ENCODE measurements at regions of chr17 and their contacts with region 1.

Region 1: GRCh38 chr17:82022981-82023374 is at the start of gene LRRC45:
- DNase-seq: peak; percentile 99
- ATAC-seq: peak; percentile 94
- H3K4me3 ChIP-seq: peak within 1 kb of the TSS; percentile 62 to 88 (median 79)
- H3K4me3 Mint-ChIP-seq: peak within 1 kb of the TSS; percentile 83
- H3K27ac ChIP-seq: peak within 1 kb of the TSS in 1 of 2 donors; percentile 57
- H3K27ac Mint-ChIP-seq: peak within 1 kb of the TSS; percentile 67
- H3K4me1 ChIP-seq: peaks cover 14 to 33% of the 10 kb centered on the region in 2 donors
- H3K4me1 Mint-ChIP-seq: peaks cover 15% of the 10 kb centered on the region
- H3K27me3 ChIP-seq: peaks cover 0 to 10% (median 0%) of the 10 kb centered on the region in 4 experiments
- H3K27me3 Mint-ChIP-seq: no peaks in the 10 kb centered on the region
- CTCF ChIP-seq: no peak
- total RNA-seq, gene LRRC45: 16.3 and 19.4 TPM in 2 replicates

Region 2: DNA sequence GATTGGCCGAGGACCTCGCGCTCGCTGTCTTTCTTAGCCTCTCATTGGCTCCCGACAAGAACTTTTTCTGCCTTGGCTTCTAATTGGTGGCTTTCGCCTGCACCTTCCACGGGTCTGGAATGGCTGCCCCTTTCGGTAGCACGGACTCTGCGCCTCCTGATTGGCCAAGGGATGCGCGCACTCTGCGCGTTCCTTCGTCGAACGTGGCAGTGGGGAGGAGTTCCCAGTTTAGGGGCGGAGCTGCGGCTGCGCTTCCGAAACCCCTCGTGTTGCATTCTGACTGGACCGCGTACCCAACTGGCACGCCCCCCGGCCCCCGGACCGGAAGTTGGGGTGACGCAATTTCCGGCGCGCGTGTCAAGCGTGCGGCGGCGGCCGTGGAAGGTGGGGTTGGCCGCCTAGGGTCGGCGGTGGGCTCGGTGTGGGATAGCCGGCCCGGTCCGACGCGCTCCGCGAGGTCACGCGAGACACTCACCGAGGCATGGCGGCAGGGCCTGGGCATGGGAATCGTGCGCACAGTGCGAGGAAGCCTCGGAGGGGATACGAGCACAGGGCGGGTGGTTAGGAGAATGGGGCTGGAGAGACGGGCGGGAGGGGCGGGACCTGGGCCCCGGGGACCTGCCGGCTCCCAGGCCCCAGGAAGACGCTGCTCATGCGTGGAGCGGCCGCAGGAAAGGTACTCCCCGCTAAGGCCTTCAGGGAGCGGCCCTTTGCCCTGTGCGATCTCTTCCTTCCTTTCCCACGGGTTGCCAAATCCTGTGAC is 162.0 kb before region 1 on chr17:
- CTCF ChIA-PET with region 1: no interaction called
- POLR2A ChIA-PET with region 1: no interaction called
- intact Hi-C with region 1: loop called (anchors 1 kb)
- DNase-seq: no peak
- ATAC-seq: peak; percentile 89
- H3K4me3 ChIP-seq: peak overlapping the region; percentile 39 to 75 (median 71)
- H3K4me3 Mint-ChIP-seq: peak overlapping the region; percentile 92
- H3K27ac ChIP-seq: peak overlapping the region; percentile 94 to 98
- H3K27ac Mint-ChIP-seq: peak overlapping the region; percentile 96
- H3K4me1 ChIP-seq: peaks cover 17 to 26% of the 10 kb centered on the region in 2 donors
- H3K4me1 Mint-ChIP-seq: peaks cover 32% of the 10 kb centered on the region
- H3K27me3 ChIP-seq: no peaks in the 10 kb centered on the region
- H3K27me3 Mint-ChIP-seq: no peaks in the 10 kb centered on the region
- CTCF ChIP-seq: no peak

Region 3: GRCh38 chr17:81911277-81911961 is 111.6 kb before region 1 on chr17 and contains the start of gene PCYT2:
- CTCF ChIA-PET with region 1: no interaction called
- POLR2A ChIA-PET with region 1: no interaction called
- intact Hi-C with region 1: loop called (anchors 1 kb)
- DNase-seq: peak; percentile 94
- ATAC-seq: peak; percentile 95
- H3K4me3 ChIP-seq: peak within 1 kb of the TSS; percentile 43 to 75 (median 65)
- H3K4me3 Mint-ChIP-seq: peak within 1 kb of the TSS; percentile 86
- H3K27ac ChIP-seq: peak within 1 kb of the TSS in 1 of 2 donors; percentile 59
- H3K27ac Mint-ChIP-seq: peak within 1 kb of the TSS; percentile 63
- H3K4me1 ChIP-seq: peaks cover 10 to 19% of the 10 kb centered on the region in 2 donors
- H3K4me1 Mint-ChIP-seq: peaks cover 15% of the 10 kb centered on the region
- H3K27me3 ChIP-seq: no peaks in the 10 kb centered on the region
- H3K27me3 Mint-ChIP-seq: no peaks in the 10 kb centered on the region
- CTCF ChIP-seq: no peak
- total RNA-seq, gene PCYT2: 34.2 and 34.9 TPM in 2 replicates

Region 4: GRCh38 chr17:81959362-81960129 is 63.4 kb before region 1 on chr17:
- CTCF ChIA-PET with region 1: interaction called, 91 read pairs
- POLR2A ChIA-PET with region 1: no interaction called
- intact Hi-C with region 1: loop called (anchors 1 kb)
- DNase-seq: peak; percentile 90
- ATAC-seq: peak; percentile 95
- H3K4me3 ChIP-seq: peak overlapping the region in 4 of 5 experiments; percentile 21 to 55 (median 46)
- H3K4me3 Mint-ChIP-seq: peak overlapping the region; percentile 64
- H3K27ac ChIP-seq: no peak overlapping the region
- H3K27ac Mint-ChIP-seq: no peak overlapping the region
- H3K4me1 ChIP-seq: peaks cover 15 to 16% of the 10 kb centered on the region in 2 donors
- H3K4me1 Mint-ChIP-seq: peaks cover 1% of the 10 kb centered on the region
- H3K27me3 ChIP-seq: peaks cover 0 to 53% (median 28%) of the 10 kb centered on the region in 4 experiments
- H3K27me3 Mint-ChIP-seq: peaks cover 21% of the 10 kb centered on the region
- CTCF ChIP-seq: peak; percentile 86

Region 5: DNA sequence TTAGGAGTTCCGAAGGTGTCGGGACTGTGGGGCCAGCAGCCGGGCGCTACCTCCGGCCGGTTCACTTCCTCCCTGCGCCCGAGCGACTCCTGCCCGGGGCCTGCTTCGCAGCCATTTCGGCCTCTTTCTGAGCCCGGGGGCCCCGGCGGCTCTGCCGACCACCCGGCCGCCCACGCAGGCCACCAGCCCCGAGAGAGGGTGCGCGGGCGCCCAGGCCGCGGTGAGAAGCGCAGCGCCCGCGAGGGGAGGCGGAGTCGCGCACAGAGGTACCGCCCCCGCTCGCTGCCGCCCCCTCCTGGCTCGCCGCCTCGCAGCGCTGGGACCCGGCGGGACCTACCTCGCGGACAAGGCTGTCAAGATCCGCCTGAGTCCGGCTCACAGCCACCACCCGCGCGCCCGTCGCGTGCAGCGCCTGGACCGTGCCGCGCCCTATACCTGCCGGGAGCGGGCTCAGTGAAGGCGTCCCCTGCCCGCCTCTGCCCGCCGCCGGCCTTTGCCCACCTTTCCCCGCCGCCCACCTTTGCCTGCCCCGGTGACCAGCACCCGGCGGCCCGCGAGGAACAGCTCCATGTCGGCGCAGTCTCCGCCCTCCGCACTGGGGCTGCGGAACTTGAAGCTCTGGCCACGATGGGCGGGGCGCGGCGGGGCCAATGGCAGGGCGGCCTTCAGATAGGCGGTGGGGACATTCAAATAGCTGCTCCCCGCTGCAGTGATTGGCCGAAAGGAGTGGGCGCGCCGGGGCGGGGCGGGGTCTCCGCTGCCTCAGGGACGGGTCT is 14.3 kb after region 1 on chr17 and contains the start of gene DCXR:
- CTCF ChIA-PET with region 1: interaction called, 11 read pairs
- POLR2A ChIA-PET with region 1: interaction called, 13 read pairs
- intact Hi-C with region 1: loop called (anchors 1 kb)
- DNase-seq: peak; percentile 98
- ATAC-seq: peak; percentile 91
- H3K4me3 ChIP-seq: peak within 1 kb of the TSS; percentile 34 to 76 (median 72)
- H3K4me3 Mint-ChIP-seq: peak within 1 kb of the TSS; percentile 90
- H3K27ac ChIP-seq: peak within 1 kb of the TSS; percentile 59 to 84
- H3K27ac Mint-ChIP-seq: peak within 1 kb of the TSS; percentile 99
- H3K4me1 ChIP-seq: peaks cover 18 to 20% of the 10 kb centered on the region in 2 donors
- H3K4me1 Mint-ChIP-seq: peaks cover 24% of the 10 kb centered on the region
- H3K27me3 ChIP-seq: peaks cover 0 to 4% (median 1%) of the 10 kb centered on the region in 4 experiments
- H3K27me3 Mint-ChIP-seq: no peaks in the 10 kb centered on the region
- CTCF ChIP-seq: peak; percentile 87
- total RNA-seq, gene DCXR: 63.9 and 70.7 TPM in 2 replicates

Region 6: DNA sequence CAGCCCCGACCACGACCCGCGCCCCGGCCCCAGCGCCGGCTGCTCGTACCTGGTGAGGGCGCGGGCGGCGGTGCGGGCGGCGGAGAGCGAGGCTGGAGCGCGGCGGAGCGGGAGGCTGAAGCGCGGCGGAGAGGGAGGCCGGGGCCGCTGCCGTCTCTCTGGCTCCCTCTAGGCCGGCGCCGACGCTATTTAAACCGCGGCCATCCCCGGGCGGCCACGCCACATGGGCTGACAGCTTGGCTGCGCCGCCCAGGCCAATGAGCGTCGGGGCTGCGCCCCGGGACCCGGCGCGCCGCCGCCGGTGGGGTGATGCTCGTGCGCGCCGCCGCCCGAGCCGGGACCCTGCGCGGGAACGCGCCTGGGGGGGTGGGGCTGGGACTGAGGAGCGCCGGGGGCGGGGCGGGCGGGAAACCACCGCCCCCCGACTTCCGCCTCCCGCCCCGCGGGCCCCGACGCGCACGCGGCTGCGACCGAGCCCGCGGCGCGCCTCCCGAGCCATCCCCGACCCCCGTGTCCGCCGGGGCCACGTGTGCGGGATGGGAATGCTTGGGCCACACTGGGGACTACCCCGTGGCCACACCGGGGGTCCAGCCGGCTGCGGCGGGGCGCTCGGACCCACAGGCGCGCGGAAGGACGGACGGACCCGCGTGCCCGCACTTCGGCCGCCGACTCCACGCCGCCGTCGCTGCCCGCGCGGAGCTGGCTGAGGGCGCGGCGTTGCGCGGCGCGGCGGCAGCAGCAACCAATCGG is 75.3 kb after region 1 on chr17 and contains the start of gene FASN:
- CTCF ChIA-PET with region 1: no interaction called
- POLR2A ChIA-PET with region 1: interaction called, 4 read pairs
- intact Hi-C with region 1: loop called (anchors 1 kb)
- DNase-seq: peak; percentile 97
- ATAC-seq: peak; percentile 76
- H3K4me3 ChIP-seq: peak within 1 kb of the TSS; percentile 11 to 78 (median 64)
- H3K4me3 Mint-ChIP-seq: peak within 1 kb of the TSS; percentile 82
- H3K27ac ChIP-seq: peak within 1 kb of the TSS; percentile 88 to 89
- H3K27ac Mint-ChIP-seq: peak within 1 kb of the TSS; percentile 89
- H3K4me1 ChIP-seq: peaks cover 16 to 28% of the 10 kb centered on the region in 2 donors
- H3K4me1 Mint-ChIP-seq: peaks cover 9% of the 10 kb centered on the region
- H3K27me3 ChIP-seq: no peaks in the 10 kb centered on the region
- H3K27me3 Mint-ChIP-seq: no peaks in the 10 kb centered on the region
- CTCF ChIP-seq: peak; percentile 58
- total RNA-seq, gene FASN: 35.6 and 36.8 TPM in 2 replicates

Measured in B cell (primary cell).